ENCODE measurements at regions of chr7 and their contacts with region 1.

Region 1: DNA sequence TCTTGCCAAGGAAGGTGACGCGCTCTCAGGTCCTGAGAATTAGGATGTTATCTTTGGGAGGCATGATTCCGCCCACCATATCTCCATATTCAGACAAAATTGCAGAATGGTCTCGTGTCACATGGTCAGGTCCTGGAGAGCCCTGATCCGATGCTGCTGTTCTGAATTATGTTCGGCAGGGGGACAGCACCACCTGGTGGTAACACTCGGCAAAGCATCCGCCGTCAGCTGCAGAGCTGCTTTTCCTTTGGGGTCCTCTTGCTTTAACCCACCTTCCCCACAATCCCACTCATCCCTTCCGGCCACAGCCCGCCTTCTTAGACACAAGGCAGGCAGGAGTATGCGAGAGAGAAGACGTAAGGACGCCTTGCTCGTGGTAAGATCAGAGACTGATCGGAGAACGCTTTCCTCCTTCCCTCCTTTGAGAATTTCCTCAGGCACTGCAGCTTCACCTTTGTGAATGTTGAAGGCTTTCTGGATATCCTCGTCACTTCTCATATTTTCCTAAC is 327.8 kb upstream of the C7orf33 start:
- DNase-seq: peak; percentile 17
- H3K4me3 ChIP-seq: no peak overlapping the region
- H3K27ac ChIP-seq: no peak overlapping the region
- H3K4me1 ChIP-seq: no peaks in the 10 kb centered on the region
- H3K27me3 ChIP-seq: no peaks in the 10 kb centered on the region
- CTCF ChIP-seq: peak; percentile 81 to 93

Region 2: DNA sequence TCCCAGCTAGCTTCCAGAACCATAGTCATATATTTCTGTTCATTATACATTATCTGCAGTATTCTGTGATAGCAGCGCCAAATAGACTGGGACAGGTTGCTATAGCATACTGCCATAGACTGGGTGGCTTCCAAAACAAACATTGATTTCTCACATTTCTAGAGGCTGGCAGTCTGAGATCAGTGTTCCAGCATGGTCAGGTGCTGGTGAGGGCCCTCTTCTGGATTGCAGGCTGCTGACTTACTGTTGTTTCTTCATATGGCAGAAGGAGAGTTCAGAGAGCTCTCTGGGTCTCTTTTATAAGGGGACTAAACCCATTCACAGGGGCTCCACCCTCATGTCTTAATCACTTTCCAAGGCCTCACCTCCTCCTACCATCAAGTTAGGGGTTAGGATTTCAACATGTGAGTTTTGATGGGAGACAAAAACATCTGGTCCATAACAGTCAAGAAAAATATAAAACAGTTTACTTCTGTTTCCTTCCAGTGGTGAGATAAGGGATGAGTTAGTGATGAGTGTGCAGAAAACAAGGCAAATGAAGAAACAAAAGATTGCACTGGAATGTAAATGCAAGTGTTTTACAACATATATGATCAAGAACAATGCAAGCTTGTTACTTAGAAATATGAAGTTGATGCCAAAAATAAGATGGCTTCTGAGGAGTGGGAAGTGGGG is 71.2 kb before region 1 on chr7:
- CTCF ChIA-PET with region 1: no interaction called
- dilution Hi-C with region 1: no loop called
- in situ Hi-C with region 1: no loop called
- intact Hi-C with region 1: no loop called
- DNase-seq: no peak
- H3K4me3 ChIP-seq: no peak overlapping the region
- H3K27ac ChIP-seq: no peak overlapping the region
- H3K4me1 ChIP-seq: no peaks in the 10 kb centered on the region
- H3K27me3 ChIP-seq: no peaks in the 10 kb centered on the region
- CTCF ChIP-seq: no peak

Region 3: GRCh38 chr7:148218603-148219002 is 44.2 kb before region 1 on chr7:
- CTCF ChIA-PET with region 1: no interaction called
- dilution Hi-C with region 1: no loop called
- in situ Hi-C with region 1: no loop called
- intact Hi-C with region 1: no loop called
- DNase-seq: no peak
- H3K4me3 ChIP-seq: no peak overlapping the region
- H3K27ac ChIP-seq: no peak overlapping the region
- H3K4me1 ChIP-seq: no peaks in the 10 kb centered on the region
- H3K27me3 ChIP-seq: no peaks in the 10 kb centered on the region
- CTCF ChIP-seq: no peak

Region 4: GRCh38 chr7:148318102-148318811 is 55.5 kb after region 1 on chr7:
- CTCF ChIA-PET with region 1: no interaction called
- dilution Hi-C with region 1: no loop called
- in situ Hi-C with region 1: no loop called
- intact Hi-C with region 1: no loop called
- DNase-seq: no peak
- H3K4me3 ChIP-seq: no peak overlapping the region
- H3K27ac ChIP-seq: no peak overlapping the region
- H3K4me1 ChIP-seq: no peaks in the 10 kb centered on the region
- H3K27me3 ChIP-seq: no peaks in the 10 kb centered on the region
- CTCF ChIP-seq: no peak

Region 5: DNA sequence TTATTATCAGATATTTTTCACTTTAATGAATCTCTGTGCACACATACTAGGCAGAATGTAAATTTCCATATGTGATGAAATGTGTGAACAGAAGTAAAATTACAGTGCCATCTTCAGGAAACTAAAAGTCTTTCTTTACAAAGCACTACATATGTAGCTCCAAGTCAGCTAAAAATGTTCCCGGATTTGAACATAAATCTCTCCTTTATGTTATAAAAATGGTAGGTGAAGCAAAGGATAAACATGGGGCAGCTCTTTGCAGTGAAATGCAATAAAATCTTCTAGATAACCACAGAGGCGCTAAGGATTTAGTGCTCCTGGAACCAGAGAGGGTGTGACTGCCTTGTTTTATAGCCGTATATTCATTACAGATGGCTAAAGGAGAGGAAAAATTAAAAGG is 222.8 kb after region 1 on chr7:
- CTCF ChIA-PET with region 1: no interaction called
- dilution Hi-C with region 1: no loop called
- in situ Hi-C with region 1: loop called in 1 of 2 experiments (anchors 10 kb)
- intact Hi-C with region 1: loop called (anchors 1 kb)
- DNase-seq: no peak
- H3K4me3 ChIP-seq: no peak overlapping the region
- H3K27ac ChIP-seq: no peak overlapping the region
- H3K4me1 ChIP-seq: peaks cover 12% of the 10 kb centered on the region
- H3K27me3 ChIP-seq: no peaks in the 10 kb centered on the region
- CTCF ChIP-seq: peak in 1 of 2 donors; percentile 39

Region 6: GRCh38 chr7:148492157-148492860 is 229.5 kb after region 1 on chr7:
- CTCF ChIA-PET with region 1: no interaction called
- dilution Hi-C with region 1: no loop called
- in situ Hi-C with region 1: loop called in 1 of 2 experiments (anchors 10 kb)
- intact Hi-C with region 1: no loop called
- DNase-seq: peak; percentile 68
- H3K4me3 ChIP-seq: no peak overlapping the region
- H3K27ac ChIP-seq: peak overlapping the region; percentile 14
- H3K4me1 ChIP-seq: no peaks in the 10 kb centered on the region
- H3K27me3 ChIP-seq: no peaks in the 10 kb centered on the region
- CTCF ChIP-seq: no peak

Region 7: GRCh38 chr7:148527707-148528168 is 265.0 kb after region 1 on chr7:
- CTCF ChIA-PET with region 1: no interaction called
- dilution Hi-C with region 1: no loop called
- in situ Hi-C with region 1: no loop called
- intact Hi-C with region 1: loop called (anchors 1 kb)
- DNase-seq: peak; percentile 79
- H3K4me3 ChIP-seq: no peak overlapping the region
- H3K27ac ChIP-seq: no peak overlapping the region
- H3K4me1 ChIP-seq: no peaks in the 10 kb centered on the region
- H3K27me3 ChIP-seq: no peaks in the 10 kb centered on the region
- CTCF ChIP-seq: peak; percentile 84 to 89